CD14-positive monocyte (primary cell): ENCODE measurements at regions of chr16 and their contacts with region 1.

Region 1: GRCh38 chr16:50368410-50369132 is at the start of gene BRD7:
- DNase-seq: peak; percentile 34 to 59 (median 44)
- H3K4me3 ChIP-seq: peak within 1 kb of the TSS; percentile 49 to 95 (median 85)
- H3K4me3 Mint-ChIP-seq: peak within 1 kb of the TSS; percentile 89 to 92
- H3K27ac ChIP-seq: peak within 1 kb of the TSS in 1 of 2 donors; percentile 69
- H3K27ac Mint-ChIP-seq: peak within 1 kb of the TSS; percentile 74 to 95 (median 86)
- H3K4me1 ChIP-seq: peaks cover 32 to 34% of the 10 kb centered on the region in 2 donors
- H3K4me1 Mint-ChIP-seq: peaks cover 37% of the 10 kb centered on the region
- H3K27me3 ChIP-seq: no peaks in the 10 kb centered on the region
- H3K27me3 Mint-ChIP-seq: peaks cover 1 to 6% (median 3%) of the 10 kb centered on the region in 3 donors
- CTCF ChIP-seq: no peak
- polyA plus RNA-seq, gene BRD7: 11.4 to 33.0 (median 21.2) TPM

Region 2: DNA sequence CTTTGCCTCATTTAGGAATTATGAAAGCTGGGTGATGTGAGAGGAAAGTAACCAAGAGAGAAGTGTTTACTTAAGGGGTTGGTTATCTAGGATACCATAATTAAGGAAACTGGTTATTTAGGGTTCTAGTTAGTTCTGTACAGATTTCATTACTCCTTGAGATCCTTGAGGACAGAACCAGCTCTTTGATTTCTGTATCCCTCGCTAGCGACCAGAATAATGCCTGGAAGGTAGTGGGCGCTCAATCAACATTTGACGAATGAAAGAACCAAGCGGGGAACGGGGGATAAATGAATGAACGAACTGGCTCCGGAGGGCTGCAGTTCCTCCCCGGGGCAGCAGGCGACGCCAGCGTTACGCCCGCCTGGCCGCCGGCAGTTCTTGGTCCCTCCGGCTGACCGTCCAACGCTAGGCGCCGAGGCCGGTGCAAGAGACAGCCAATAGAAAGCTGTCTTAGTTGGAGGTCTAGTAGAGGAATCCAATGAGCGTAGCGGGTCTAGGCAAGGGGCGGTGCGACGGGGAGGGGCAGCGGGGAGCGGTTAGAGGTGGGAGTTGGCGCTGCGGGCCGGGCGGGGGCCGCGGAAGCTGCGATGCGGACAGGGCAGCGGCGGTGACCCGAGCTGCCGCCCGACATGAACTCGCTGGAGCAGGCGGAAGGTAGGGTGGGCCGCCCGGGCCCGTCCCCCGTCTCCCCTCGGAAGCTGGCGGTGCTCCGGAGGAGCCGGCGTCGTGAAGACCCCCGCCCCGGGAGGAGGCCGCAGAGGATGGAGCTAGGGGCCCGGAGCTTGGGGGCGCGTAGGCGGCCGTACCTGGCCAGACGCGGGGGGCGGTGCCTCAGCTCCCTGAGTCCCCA is 343.7 kb before region 1 on chr16 and contains the start of gene CNEP1R1:
- intact Hi-C with region 1: loop called (anchors 2 to 5 kb)
- DNase-seq: peak; percentile 96 to 97 (median 96)
- H3K4me3 ChIP-seq: peak within 1 kb of the TSS; percentile 65 to 95 (median 92)
- H3K4me3 Mint-ChIP-seq: peak within 1 kb of the TSS; percentile 94 to 98
- H3K27ac ChIP-seq: peak within 1 kb of the TSS; percentile 43 to 87
- H3K27ac Mint-ChIP-seq: peak within 1 kb of the TSS; percentile 81 to 94 (median 91)
- H3K4me1 ChIP-seq: peaks cover 12 to 24% of the 10 kb centered on the region in 2 donors
- H3K4me1 Mint-ChIP-seq: peaks cover 31% of the 10 kb centered on the region
- H3K27me3 ChIP-seq: no peaks in the 10 kb centered on the region
- H3K27me3 Mint-ChIP-seq: peaks cover 0 to 5% (median 0%) of the 10 kb centered on the region in 3 donors
- CTCF ChIP-seq: peak; percentile 99
- polyA plus RNA-seq, gene CNEP1R1: 13.7 to 49.6 (median 19.3) TPM

Region 3: DNA sequence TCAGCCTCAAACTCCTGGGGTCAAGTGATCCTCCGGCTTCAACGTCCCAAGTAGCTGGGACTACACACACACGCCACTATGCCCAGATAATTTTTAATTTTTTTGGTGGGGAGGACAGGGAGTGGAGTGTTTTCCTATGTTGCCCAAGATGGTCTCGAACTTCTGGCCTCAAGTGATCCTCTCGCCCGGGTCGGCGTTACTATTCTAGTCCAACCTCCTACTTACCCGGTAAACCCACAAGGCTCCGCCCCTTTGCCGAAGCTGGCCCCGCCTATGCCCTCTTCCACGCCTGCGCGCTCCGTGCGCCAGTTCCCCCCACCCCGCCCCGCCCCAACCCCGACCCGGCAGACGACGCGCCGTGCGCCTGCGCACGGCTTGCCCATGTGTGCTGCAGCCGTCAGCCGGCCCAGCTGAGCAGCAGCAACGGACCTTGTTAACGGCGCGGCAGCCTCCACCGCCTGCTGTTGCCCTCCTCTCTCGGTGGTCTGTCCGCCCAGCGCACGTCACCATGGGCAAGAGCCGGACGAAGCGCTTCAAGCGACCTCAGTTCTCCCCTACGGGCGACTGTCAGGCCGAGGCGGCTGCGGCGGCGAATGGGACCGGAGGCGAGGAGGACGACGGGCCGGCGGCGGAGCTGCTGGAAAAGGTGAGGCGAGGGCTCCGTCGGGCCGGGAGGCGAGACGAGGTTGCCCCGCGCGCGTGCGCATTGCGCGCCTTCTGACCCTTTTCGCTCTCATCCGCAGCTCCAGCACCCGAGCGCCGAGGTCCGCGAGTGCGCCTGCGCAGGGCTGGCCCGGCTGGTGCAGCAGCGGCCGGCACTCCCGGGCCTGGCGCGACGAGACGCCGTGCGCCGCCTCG is 302.7 kb before region 1 on chr16 and contains the start of gene HEATR3:
- intact Hi-C with region 1: loop called in 1 of 2 experiments (anchors 5 kb)
- DNase-seq: peak; percentile 89 to 96 (median 91)
- H3K4me3 ChIP-seq: peak within 1 kb of the TSS; percentile 51 to 96 (median 93)
- H3K4me3 Mint-ChIP-seq: peak within 1 kb of the TSS; percentile 92 to 94
- H3K27ac ChIP-seq: peak within 1 kb of the TSS; percentile 66 to 87
- H3K27ac Mint-ChIP-seq: peak within 1 kb of the TSS; percentile 89 to 97 (median 95)
- H3K4me1 ChIP-seq: peaks cover 26% of the 10 kb centered on the region in 2 donors
- H3K4me1 Mint-ChIP-seq: peaks cover 35% of the 10 kb centered on the region
- H3K27me3 ChIP-seq: no peaks in the 10 kb centered on the region
- H3K27me3 Mint-ChIP-seq: peaks cover 0 to 2% (median 1%) of the 10 kb centered on the region in 3 donors
- CTCF ChIP-seq: no peak
- polyA plus RNA-seq, gene HEATR3: 10.4 to 40.6 (median 10.7) TPM

Region 4: DNA sequence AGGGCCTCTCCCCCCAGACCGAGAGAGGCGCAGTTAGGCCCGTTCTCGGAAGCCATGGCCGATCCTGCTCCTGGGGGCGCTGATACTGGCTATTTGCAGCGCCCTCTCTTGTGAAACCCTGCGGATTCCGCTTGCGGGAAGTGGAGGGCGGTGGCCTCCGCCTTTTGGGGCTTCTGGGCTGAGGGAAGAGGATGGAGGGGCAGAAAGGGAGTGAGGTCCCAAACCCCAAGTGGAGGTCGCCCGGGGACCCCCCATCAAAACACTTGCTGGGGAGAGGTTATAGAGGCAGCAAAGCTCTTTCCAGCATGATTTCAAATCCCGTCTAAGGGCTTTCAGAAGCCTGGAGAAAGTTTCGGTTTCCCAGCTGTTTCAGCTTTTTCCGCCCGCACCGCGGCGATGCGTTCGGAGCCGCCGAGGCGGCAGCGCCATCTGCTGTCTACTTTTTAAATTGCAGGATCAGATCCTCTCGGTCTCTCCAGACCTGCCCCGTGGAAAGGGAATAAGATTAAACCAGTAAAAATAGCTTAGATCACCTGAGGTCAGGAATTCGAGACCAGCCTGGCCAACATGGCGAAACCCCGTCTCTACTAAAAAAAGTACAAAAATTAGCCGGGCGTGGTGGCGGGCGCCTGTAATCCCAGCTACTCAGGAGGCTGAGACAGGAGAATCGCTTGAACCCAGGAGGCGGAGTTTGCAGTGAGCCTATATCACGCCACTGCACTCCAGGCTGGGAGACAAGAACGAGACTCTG is 296.7 kb after region 1 on chr16:
- intact Hi-C with region 1: loop called (anchors 5 to 10 kb)
- DNase-seq: peak; percentile 68 to 80 (median 72)
- H3K4me3 ChIP-seq: peak overlapping the region; percentile 65 to 83 (median 66)
- H3K4me3 Mint-ChIP-seq: peak overlapping the region; percentile 88 to 91
- H3K27ac ChIP-seq: peak overlapping the region; percentile 55 to 82
- H3K27ac Mint-ChIP-seq: peak overlapping the region; percentile 88 to 95 (median 91)
- H3K4me1 ChIP-seq: peaks cover 31 to 46% of the 10 kb centered on the region in 2 donors
- H3K4me1 Mint-ChIP-seq: peaks cover 41% of the 10 kb centered on the region
- H3K27me3 ChIP-seq: no peaks in the 10 kb centered on the region
- H3K27me3 Mint-ChIP-seq: peaks cover 0 to 2% (median 1%) of the 10 kb centered on the region in 3 donors
- CTCF ChIP-seq: peak; percentile 94